Activated CD8-positive, alpha-beta T cell treated with anti-CD3 and anti-CD28 coated beads for 36 hours (primary cell): ENCODE measurements at regions of chr12 and their contacts with region 1.

Region 1: GRCh38 chr12:76621582-76622024 is 62.0 kb upstream of the OSBPL8 start:
- DNase-seq: peak; percentile 83
- ATAC-seq: peak; percentile 95
- H3K4me3 Mint-ChIP-seq: no peak overlapping the region
- H3K27ac Mint-ChIP-seq: no peak overlapping the region
- H3K4me1 Mint-ChIP-seq: peaks cover 3% of the 10 kb centered on the region
- H3K27me3 Mint-ChIP-seq: peaks cover 2% of the 10 kb centered on the region
- CTCF ChIP-seq: peak; percentile 95

Region 2: GRCh38 chr12:76489737-76490136 is 131.9 kb before region 1 on chr12:
- CTCF ChIA-PET with region 1: no interaction called
- POLR2A ChIA-PET with region 1: no interaction called
- intact Hi-C with region 1: no loop called
- DNase-seq: no peak
- ATAC-seq: no peak
- H3K4me3 Mint-ChIP-seq: no peak overlapping the region
- H3K27ac Mint-ChIP-seq: no peak overlapping the region
- H3K4me1 Mint-ChIP-seq: peaks cover 34% of the 10 kb centered on the region
- H3K27me3 Mint-ChIP-seq: no peaks in the 10 kb centered on the region
- CTCF ChIP-seq: no peak

Region 3: DNA sequence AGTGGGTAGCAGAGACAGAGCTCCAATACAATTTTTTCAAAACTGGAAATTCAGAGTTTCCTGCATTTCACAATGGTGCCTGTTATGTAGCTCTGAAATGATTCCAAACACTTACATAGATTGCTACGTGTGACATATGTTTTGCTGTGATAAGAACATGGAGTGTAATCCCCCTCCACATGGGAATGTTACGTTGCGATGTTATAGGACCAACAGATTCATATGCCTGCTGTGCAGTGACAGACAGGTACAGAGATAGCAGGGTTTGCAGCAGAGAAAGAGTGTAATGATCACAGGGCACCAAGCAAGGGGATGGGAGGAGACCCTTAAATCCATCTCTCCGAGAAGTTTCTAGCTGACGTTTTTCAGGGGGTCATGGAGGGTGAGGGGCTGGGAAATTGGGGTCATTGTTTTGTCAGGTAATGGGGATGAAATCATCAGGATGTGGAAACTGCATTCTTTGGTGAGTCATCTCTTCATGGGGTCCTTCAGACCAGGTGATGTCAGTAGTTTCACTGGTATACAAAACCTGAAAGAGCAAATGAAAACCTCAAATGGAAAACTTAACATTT is 14.6 kb after region 1 on chr12:
- CTCF ChIA-PET with region 1: interaction called, 19 read pairs
- POLR2A ChIA-PET with region 1: interaction called, 3 read pairs
- intact Hi-C with region 1: no loop called
- DNase-seq: peak; percentile 24
- ATAC-seq: peak; percentile 89
- H3K4me3 Mint-ChIP-seq: no peak overlapping the region
- H3K27ac Mint-ChIP-seq: peak overlapping the region; percentile 26
- H3K4me1 Mint-ChIP-seq: peaks cover 13% of the 10 kb centered on the region
- H3K27me3 Mint-ChIP-seq: peaks cover 1% of the 10 kb centered on the region
- CTCF ChIP-seq: no peak

Region 4: DNA sequence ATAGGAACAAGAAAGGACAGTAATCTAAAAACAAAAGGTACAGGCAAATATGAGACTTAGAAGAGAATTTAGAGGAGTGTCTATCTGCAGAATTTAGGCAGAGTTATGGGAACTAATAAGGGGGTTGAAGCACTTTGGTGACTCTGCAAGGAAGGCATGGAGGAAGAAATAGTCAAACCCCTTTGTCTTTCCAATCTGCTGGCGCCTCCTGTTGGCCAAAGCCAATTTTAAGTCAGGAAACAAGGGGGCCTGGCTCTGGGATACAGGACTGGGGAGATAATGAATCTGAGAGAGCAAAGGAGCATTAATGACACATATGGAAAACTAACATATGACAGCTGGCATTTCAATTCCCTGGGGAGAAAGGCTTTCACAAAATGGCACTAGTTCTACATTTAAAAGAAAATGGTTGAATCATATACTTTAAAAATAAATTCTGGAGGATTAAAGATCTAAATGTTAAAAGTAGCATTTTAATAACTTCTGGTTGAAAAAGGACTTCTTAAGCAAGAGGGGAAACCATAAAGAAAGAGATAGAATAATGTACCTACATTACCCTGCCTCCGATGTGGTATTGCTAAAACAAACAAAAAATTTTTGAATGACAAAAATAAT is 305.7 kb after region 1 on chr12:
- CTCF ChIA-PET with region 1: interaction called, 9 read pairs
- POLR2A ChIA-PET with region 1: no interaction called
- intact Hi-C with region 1: loop called (anchors 5 kb)
- DNase-seq: peak; percentile 71
- ATAC-seq: no peak
- H3K4me3 Mint-ChIP-seq: no peak overlapping the region
- H3K27ac Mint-ChIP-seq: no peak overlapping the region
- H3K4me1 Mint-ChIP-seq: no peaks in the 10 kb centered on the region
- H3K27me3 Mint-ChIP-seq: peaks cover 3% of the 10 kb centered on the region
- CTCF ChIP-seq: peak; percentile 76